ENCODE measurements at regions of chr13 and their contacts with region 1.

Region 1: GRCh38 chr13:73835138-73835721 is 299.0 kb downstream of the KLF12 start:
- DNase-seq: no peak
- H3K4me3 ChIP-seq: no peak overlapping the region
- H3K27ac ChIP-seq: no peak overlapping the region
- H3K4me1 ChIP-seq: peaks cover 0 to 26% (median 20%) of the 10 kb centered on the region in 4 donors
- H3K27me3 ChIP-seq: no peaks in the 10 kb centered on the region
- CTCF ChIP-seq: peak; percentile 48 to 74 (median 68)
- EP300 ChIP-seq: no peak
- POLR2A ChIP-seq: no peak

Region 2: DNA sequence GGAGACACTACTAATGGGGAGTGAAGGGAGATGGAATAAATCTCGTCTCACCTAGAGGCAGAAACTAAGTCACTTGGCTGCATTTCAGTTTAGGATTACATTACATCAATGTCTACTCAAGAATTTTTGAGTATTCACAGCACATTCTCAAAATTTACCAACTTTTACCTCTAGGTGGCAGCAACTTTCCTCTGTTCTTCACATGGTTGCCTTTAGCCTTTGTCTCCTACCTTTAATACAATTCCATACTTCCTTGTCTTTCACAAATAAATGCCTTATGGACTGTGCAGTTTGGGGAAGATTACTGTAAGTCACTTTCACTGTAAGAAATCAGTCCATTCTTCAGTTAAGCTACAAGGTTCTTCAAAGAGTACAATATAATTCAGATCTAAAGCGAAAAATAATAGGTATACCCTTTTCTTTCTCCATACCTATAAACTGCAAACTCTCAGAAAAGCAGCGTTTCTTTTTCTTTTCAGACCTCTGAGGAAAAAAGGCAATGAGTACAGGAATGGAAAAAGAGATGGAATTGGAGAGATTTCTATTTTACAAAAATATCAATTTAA is 80.4 kb before region 1 on chr13:
- intact Hi-C with region 1: loop called (anchors 10 kb)
- DNase-seq: no peak
- H3K4me3 ChIP-seq: no peak overlapping the region
- H3K27ac ChIP-seq: no peak overlapping the region
- H3K4me1 ChIP-seq: peaks cover 0 to 42% (median 20%) of the 10 kb centered on the region in 4 donors
- H3K27me3 ChIP-seq: no peaks in the 10 kb centered on the region
- CTCF ChIP-seq: peak; percentile 27 to 73 (median 62)
- EP300 ChIP-seq: no peak
- POLR2A ChIP-seq: no peak

Region 3: GRCh38 chr13:74246487-74246886 is 411.3 kb after region 1 on chr13:
- intact Hi-C with region 1: no loop called
- DNase-seq: peak; percentile 66
- H3K4me3 ChIP-seq: peak overlapping the region in 2 of 4 donors; percentile 17 to 23
- H3K27ac ChIP-seq: no peak overlapping the region
- H3K4me1 ChIP-seq: peaks cover 0 to 15% (median 9%) of the 10 kb centered on the region in 4 donors
- H3K27me3 ChIP-seq: no peaks in the 10 kb centered on the region
- CTCF ChIP-seq: no peak
- EP300 ChIP-seq: no peak
- POLR2A ChIP-seq: no peak

Region 4: GRCh38 chr13:75219479-75220237 is 1384.4 kb after region 1 on chr13:
- intact Hi-C with region 1: loop called (anchors 5 kb)
- DNase-seq: peak; percentile 87
- H3K4me3 ChIP-seq: peak overlapping the region in 2 of 4 donors; percentile 18 to 23
- H3K27ac ChIP-seq: no peak overlapping the region
- H3K4me1 ChIP-seq: peaks cover 0 to 9% (median 2%) of the 10 kb centered on the region in 4 donors
- H3K27me3 ChIP-seq: peaks cover 0 to 4% (median 0%) of the 10 kb centered on the region in 3 donors
- CTCF ChIP-seq: peak; percentile 67 to 97 (median 78)
- EP300 ChIP-seq: no peak
- POLR2A ChIP-seq: no peak